ENCODE measurements at regions of chr1 and their contacts with region 1.

Region 1: GRCh38 chr1:212558693-212559480 is 49.7 kb upstream of the ATF3 start:
- DNase-seq: peak; percentile 93
- ATAC-seq: peak; percentile 95
- H3K4me3 Mint-ChIP-seq: peak overlapping the region; percentile 65
- H3K27ac Mint-ChIP-seq: peak overlapping the region; percentile 93
- H3K4me1 Mint-ChIP-seq: peaks cover 14% of the 10 kb centered on the region
- H3K27me3 Mint-ChIP-seq: peaks cover 12% of the 10 kb centered on the region
- CTCF ChIP-seq: no peak

Region 2: GRCh38 chr1:212284744-212285684 is 273.9 kb before region 1 on chr1 and contains the start of gene PPP2R5A:
- CTCF ChIA-PET with region 1: no interaction called
- POLR2A ChIA-PET with region 1: no interaction called
- intact Hi-C with region 1: loop called (anchors 10 kb)
- DNase-seq: peak; percentile 99
- ATAC-seq: peak; percentile 91
- H3K4me3 Mint-ChIP-seq: peak within 1 kb of the TSS; percentile 96
- H3K27ac Mint-ChIP-seq: peak within 1 kb of the TSS; percentile 97
- H3K4me1 Mint-ChIP-seq: peaks cover 27% of the 10 kb centered on the region
- H3K27me3 Mint-ChIP-seq: no peaks in the 10 kb centered on the region
- CTCF ChIP-seq: peak; percentile 38
- total RNA-seq, gene PPP2R5A: 35.2 to 36.5 TPM

Region 3: GRCh38 chr1:212498283-212499040 is 60.4 kb before region 1 on chr1:
- CTCF ChIA-PET with region 1: no interaction called
- POLR2A ChIA-PET with region 1: no interaction called
- intact Hi-C with region 1: no loop called
- DNase-seq: no peak
- ATAC-seq: no peak
- H3K4me3 Mint-ChIP-seq: no peak overlapping the region
- H3K27ac Mint-ChIP-seq: no peak overlapping the region
- H3K4me1 Mint-ChIP-seq: no peaks in the 10 kb centered on the region
- H3K27me3 Mint-ChIP-seq: peaks cover 2% of the 10 kb centered on the region
- CTCF ChIP-seq: no peak

Measured in activated CD8-positive, alpha-beta T cell treated with anti-CD3 and anti-CD28 coated beads for 36 hours (primary cell).